MCF 10A (cell line): ENCODE measurements at regions of chr19 and their contacts with region 1.

Region 1: GRCh38 chr19:55632463-55632834 is 8.1 kb upstream of the ZNF784 start:
- DNase-seq: peak; percentile 96
- H3K4me3 Mint-ChIP-seq: no peak overlapping the region
- H3K27ac Mint-ChIP-seq: no peak overlapping the region
- H3K4me1 Mint-ChIP-seq: peaks cover 30% of the 10 kb centered on the region
- H3K27me3 Mint-ChIP-seq: no peaks in the 10 kb centered on the region
- CTCF ChIP-seq: peak; percentile 66

Region 2: GRCh38 chr19:54674021-54674617 is 958.3 kb before region 1 on chr19:
- CTCF ChIA-PET with region 1: no interaction called
- POLR2A ChIA-PET with region 1: no interaction called
- intact Hi-C with region 1: no loop called
- DNase-seq: peak; percentile 67
- H3K4me3 Mint-ChIP-seq: no peak overlapping the region
- H3K27ac Mint-ChIP-seq: no peak overlapping the region
- H3K4me1 Mint-ChIP-seq: no peaks in the 10 kb centered on the region
- H3K27me3 Mint-ChIP-seq: no peaks in the 10 kb centered on the region
- CTCF ChIP-seq: peak; percentile 62

Region 3: GRCh38 chr19:55516878-55517620 is 115.4 kb before region 1 on chr19:
- CTCF ChIA-PET with region 1: interaction called, 122 read pairs
- POLR2A ChIA-PET with region 1: interaction called, 4 read pairs
- intact Hi-C with region 1: loop called (anchors 1 kb)
- DNase-seq: peak; percentile 94
- H3K4me3 Mint-ChIP-seq: peak overlapping the region; percentile 73
- H3K27ac Mint-ChIP-seq: peak overlapping the region; percentile 74
- H3K4me1 Mint-ChIP-seq: peaks cover 5% of the 10 kb centered on the region
- H3K27me3 Mint-ChIP-seq: peaks cover 11% of the 10 kb centered on the region
- CTCF ChIP-seq: peak; percentile 79

Region 4: GRCh38 chr19:55605207-55605636 is 27.2 kb before region 1 on chr19:
- CTCF ChIA-PET with region 1: interaction called, 32 read pairs
- POLR2A ChIA-PET with region 1: interaction called, 9 read pairs
- intact Hi-C with region 1: no loop called
- DNase-seq: peak; percentile 99
- H3K4me3 Mint-ChIP-seq: peak overlapping the region; percentile 84
- H3K27ac Mint-ChIP-seq: peak overlapping the region; percentile 80
- H3K4me1 Mint-ChIP-seq: peaks cover 46% of the 10 kb centered on the region
- H3K27me3 Mint-ChIP-seq: no peaks in the 10 kb centered on the region
- CTCF ChIP-seq: no peak

Region 5: DNA sequence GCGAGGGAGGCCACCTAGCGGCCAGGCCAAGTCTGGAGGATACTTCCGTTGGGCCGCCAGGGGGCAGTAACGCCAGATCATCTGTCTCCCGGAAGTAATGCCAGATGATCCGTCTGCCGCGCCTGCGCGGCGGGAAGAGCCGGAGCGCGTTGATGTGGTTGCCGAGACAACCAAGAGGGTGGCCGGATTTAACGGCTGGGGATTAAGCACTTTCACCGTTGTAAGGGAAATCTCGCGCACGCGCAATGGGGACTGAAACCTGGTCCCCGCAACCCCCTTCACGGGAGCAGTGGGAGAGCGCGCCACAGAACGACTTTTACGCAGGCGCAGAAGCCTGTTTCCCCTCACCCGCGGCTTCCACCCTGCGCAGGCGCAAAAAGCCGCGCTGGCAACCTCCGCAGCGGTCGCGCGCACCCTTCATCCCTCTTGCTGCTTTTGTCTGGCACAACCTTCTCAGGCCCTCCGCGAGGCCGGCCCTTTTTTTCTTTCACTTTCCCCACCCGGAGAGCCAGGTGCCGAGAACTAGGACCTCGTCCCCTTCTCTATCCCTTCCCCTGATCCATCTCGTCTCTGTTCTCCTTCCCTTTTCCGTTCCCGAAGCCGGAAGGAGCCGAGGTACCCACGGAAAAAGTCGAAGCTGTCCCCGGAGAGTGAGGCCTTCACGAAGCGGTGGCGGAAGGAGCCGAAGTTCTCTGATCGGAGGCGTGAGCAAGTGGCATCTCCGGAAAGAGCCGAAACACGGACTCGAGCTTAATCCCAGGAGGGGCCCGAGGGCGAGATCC is 21.5 kb after region 1 on chr19:
- CTCF ChIA-PET with region 1: interaction called, 28 read pairs
- POLR2A ChIA-PET with region 1: interaction called, 15 read pairs
- intact Hi-C with region 1: no loop called
- DNase-seq: peak; percentile 100
- H3K4me3 Mint-ChIP-seq: peak overlapping the region; percentile 84
- H3K27ac Mint-ChIP-seq: peak overlapping the region; percentile 98
- H3K4me1 Mint-ChIP-seq: peaks cover 22% of the 10 kb centered on the region
- H3K27me3 Mint-ChIP-seq: no peaks in the 10 kb centered on the region
- CTCF ChIP-seq: peak; percentile 99

Region 6: DNA sequence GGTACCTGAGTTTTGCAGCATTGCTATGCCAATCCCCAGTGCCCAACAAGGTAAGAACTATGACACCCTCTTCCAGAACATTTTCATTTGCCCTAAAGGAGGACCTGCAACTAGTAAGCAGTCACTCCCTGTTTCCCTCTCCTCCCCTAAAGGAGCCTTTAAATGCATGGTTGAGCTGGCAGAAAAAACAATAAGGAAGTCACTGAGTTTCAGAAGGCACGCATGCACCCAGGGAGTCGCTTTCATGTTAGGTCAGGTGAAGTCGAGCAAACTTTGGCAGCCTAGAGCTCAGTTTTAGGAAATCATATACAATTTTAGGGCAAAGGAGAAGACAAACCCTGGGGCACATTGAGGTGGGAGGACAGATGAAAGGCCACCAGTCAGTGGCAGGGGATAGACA is 187.6 kb after region 1 on chr19:
- CTCF ChIA-PET with region 1: no interaction called
- POLR2A ChIA-PET with region 1: no interaction called
- intact Hi-C with region 1: no loop called
- DNase-seq: no peak
- H3K4me3 Mint-ChIP-seq: no peak overlapping the region
- H3K27ac Mint-ChIP-seq: no peak overlapping the region
- H3K4me1 Mint-ChIP-seq: no peaks in the 10 kb centered on the region
- H3K27me3 Mint-ChIP-seq: no peaks in the 10 kb centered on the region
- CTCF ChIP-seq: no peak